H1 (cell line): ENCODE measurements at regions of chr3 and their contacts with region 1.

Region 1: DNA sequence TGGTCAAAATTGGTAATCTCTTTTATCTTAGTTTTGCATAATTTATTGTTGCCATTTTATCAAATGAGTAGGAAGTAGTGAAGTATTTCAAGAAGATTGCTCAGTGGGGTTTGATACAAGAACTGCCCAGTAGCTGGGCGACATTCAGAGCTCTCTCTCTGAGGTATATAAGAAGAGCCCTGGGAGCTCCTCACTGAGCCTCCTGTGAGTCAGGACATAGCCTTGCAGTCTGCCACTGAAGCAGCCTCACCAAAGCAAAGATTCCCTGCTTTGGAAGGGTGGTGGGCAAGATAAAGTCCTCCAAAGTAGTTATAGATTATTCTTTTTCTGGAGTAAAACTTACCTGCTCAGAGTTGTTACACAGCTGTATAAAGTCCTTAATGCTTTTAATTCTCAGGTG is 26.1 kb downstream of the SKIL start:
- DNase-seq: no peak
- H3K4me3 ChIP-seq: no peak overlapping the region
- H3K27ac ChIP-seq: no peak overlapping the region
- H3K4me1 ChIP-seq: no peaks in the 10 kb centered on the region
- H3K27me3 ChIP-seq: no peaks in the 10 kb centered on the region
- CTCF ChIP-seq: no peak
- EP300 ChIP-seq: no peak
- POLR2A ChIP-seq: no peak
- RAD21 ChIP-seq: no peak

Region 2: DNA sequence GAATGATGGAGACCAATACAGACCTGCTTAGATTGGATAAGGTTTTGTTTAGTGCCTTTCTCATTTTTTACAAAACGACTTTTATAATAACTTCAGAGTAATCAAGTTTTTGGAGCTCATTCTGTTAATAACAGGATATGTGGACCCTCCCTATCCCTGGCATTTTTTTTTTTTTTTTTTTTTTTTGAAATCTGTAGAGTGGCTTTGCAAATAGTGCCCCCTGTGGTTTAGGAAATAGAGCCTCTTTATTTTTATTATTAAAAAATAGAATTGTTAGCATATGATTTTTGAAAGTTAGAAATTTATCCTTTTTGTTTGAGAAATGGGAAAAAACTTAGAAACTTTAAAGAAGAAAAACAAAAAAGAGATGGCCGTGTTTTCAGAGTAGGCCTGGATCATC is 14.6 kb before region 1 on chr3:
- CTCF ChIA-PET with region 1: interaction called, 10 read pairs
- POLR2A ChIA-PET with region 1: interaction called, 21 read pairs
- DNase-seq: no peak
- H3K4me3 ChIP-seq: no peak overlapping the region
- H3K27ac ChIP-seq: no peak overlapping the region
- H3K4me1 ChIP-seq: no peaks in the 10 kb centered on the region; a peak in 1 of 7 replicates
- H3K27me3 ChIP-seq: no peaks in the 10 kb centered on the region
- CTCF ChIP-seq: no peak
- EP300 ChIP-seq: no peak
- POLR2A ChIP-seq: no peak
- RAD21 ChIP-seq: no peak

Region 3: GRCh38 chr3:170467007-170467406 is 83.4 kb after region 1 on chr3:
- CTCF ChIA-PET with region 1: no interaction called
- POLR2A ChIA-PET with region 1: no interaction called
- DNase-seq: peak in 1 of 2 experiments; percentile 46
- H3K4me3 ChIP-seq: no peak overlapping the region
- H3K27ac ChIP-seq: no peak overlapping the region
- H3K4me1 ChIP-seq: peaks cover 0 to 9% (median 0%) of the 10 kb centered on the region in 4 experiments; a peak in 1 of 7 replicates
- H3K27me3 ChIP-seq: no peaks in the 10 kb centered on the region
- CTCF ChIP-seq: no peak
- EP300 ChIP-seq: no peak
- POLR2A ChIP-seq: no peak
- RAD21 ChIP-seq: no peak